ENCODE measurements at regions of chr3 and their contacts with region 1.

Region 1: GRCh38 chr3:14947886-14948555 is 638 bp downstream of the NR2C2 start:
- DNase-seq: peak; percentile 97
- H3K4me3 Mint-ChIP-seq: peak overlapping the region; percentile 99
- H3K27ac Mint-ChIP-seq: peak overlapping the region; percentile 100
- H3K4me1 Mint-ChIP-seq: peaks cover 42% of the 10 kb centered on the region
- H3K27me3 Mint-ChIP-seq: no peaks in the 10 kb centered on the region

Region 2: DNA sequence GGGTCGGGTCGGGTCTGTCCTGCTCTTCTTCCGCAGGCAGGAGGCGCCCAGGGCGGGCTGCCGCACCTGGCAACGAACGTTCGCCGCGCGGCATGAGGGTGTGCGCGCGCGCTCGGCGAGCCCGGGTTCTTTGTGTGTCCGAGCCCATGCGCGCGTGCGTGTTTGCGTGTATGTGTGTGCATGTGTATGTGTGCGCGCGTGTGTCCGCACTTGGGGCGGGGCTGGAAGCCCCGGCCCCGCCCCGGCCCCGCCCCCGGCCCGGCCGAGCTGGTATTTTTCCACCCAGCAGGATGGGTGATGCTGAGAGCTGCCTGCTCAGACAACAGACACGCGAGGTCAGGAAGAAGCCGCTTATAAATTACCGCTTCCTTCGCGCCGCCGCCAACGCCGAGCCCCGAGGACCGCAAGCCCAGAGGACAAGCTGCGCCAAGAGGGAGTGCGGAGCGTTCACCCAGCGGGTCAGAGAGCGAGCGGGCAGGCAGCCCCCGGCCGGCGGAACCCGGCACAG is 545.7 kb before region 1 on chr3 and contains the start of gene SLC6A6:
- CTCF ChIA-PET with region 1: no interaction called
- intact Hi-C with region 1: loop called (anchors 1 kb)
- DNase-seq: peak; percentile 91
- H3K4me3 Mint-ChIP-seq: peak within 1 kb of the TSS; percentile 96
- H3K27ac Mint-ChIP-seq: peak within 1 kb of the TSS; percentile 91
- H3K4me1 Mint-ChIP-seq: peaks cover 32% of the 10 kb centered on the region
- H3K27me3 Mint-ChIP-seq: no peaks in the 10 kb centered on the region
- total RNA-seq, gene SLC6A6: 32.2 to 36.9 TPM

Region 3: GRCh38 chr3:14651440-14652251 is 296.4 kb before region 1 on chr3 and contains the start of gene CCDC174:
- CTCF ChIA-PET with region 1: no interaction called
- intact Hi-C with region 1: loop called (anchors 1 kb)
- DNase-seq: peak; percentile 97
- H3K4me3 Mint-ChIP-seq: peak within 1 kb of the TSS; percentile 99
- H3K27ac Mint-ChIP-seq: peak within 1 kb of the TSS; percentile 98
- H3K4me1 Mint-ChIP-seq: peaks cover 38% of the 10 kb centered on the region
- H3K27me3 Mint-ChIP-seq: no peaks in the 10 kb centered on the region
- total RNA-seq, gene CCDC174: 16.1 to 20.7 TPM

Region 4: DNA sequence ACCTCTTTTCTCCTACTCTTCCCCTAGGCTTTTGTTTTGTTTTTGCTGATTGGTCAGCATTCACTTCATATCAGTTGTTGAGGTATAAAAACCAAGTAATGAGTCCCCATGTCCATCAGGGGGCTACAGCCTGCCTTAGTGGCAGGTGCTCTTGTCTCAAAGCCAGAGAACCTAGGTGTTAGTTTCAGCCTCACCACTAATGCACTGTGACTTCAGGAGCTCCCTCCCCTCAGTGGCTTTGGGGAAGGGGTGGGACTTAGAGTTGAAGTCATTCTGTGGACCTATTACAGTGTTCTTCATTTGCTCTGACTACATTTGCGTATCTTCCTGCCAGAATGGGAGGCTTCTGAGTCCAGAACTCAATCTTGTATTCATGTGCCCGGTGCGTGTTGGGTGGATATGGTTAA is 41.0 kb after region 1 on chr3:
- CTCF ChIA-PET with region 1: no interaction called
- intact Hi-C with region 1: loop called (anchors 1 kb)
- DNase-seq: peak; percentile 77
- H3K4me3 Mint-ChIP-seq: no peak overlapping the region
- H3K27ac Mint-ChIP-seq: peak overlapping the region; percentile 27
- H3K4me1 Mint-ChIP-seq: peaks cover 50% of the 10 kb centered on the region
- H3K27me3 Mint-ChIP-seq: no peaks in the 10 kb centered on the region

Region 5: DNA sequence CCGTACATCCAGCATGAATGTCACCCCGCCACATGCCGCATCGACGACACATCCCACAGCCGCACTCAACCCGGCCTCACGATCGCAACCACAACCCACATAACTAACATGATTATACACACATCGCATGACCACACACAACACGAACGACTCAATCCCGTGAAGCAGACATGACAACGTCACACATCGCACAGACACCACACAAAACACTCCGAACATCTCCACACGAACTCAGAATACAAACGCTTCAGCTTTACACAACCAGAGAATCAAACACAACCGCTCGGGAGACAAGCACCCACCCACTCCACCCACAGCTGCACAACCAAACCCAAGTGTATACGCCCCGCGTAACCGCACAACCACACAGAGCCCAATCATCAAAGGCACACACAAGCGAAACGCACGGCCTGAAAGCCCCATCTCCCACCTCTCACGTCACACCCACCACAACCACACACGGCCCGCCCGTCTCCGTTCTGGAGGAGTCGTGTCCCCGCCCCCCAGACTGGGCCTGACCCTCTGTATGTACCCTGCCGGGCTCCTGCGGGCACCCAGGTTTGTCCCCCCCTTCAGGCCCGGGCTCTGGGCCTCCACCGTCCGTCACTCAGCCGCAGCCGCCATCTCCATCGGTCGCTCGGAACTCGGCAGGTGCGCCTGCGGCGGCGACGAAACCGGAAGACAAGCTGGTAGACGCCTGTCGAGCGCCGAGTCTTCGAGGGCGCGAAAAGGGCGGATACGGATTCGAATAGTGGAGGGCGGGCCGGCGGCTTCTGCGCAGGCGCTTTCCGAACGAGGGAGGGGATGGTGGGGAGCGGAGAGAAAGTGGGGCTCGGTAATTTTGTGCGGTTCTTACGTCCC is 150.7 kb after region 1 on chr3 and contains the start of gene RBSN:
- CTCF ChIA-PET with region 1: no interaction called
- intact Hi-C with region 1: loop called (anchors 1 kb)
- DNase-seq: peak; percentile 97
- H3K4me3 Mint-ChIP-seq: peak within 1 kb of the TSS; percentile 90
- H3K27ac Mint-ChIP-seq: peak within 1 kb of the TSS; percentile 83
- H3K4me1 Mint-ChIP-seq: peaks cover 10% of the 10 kb centered on the region
- H3K27me3 Mint-ChIP-seq: no peaks in the 10 kb centered on the region
- total RNA-seq, gene RBSN: 15.3 to 15.8 TPM

Region 6: DNA sequence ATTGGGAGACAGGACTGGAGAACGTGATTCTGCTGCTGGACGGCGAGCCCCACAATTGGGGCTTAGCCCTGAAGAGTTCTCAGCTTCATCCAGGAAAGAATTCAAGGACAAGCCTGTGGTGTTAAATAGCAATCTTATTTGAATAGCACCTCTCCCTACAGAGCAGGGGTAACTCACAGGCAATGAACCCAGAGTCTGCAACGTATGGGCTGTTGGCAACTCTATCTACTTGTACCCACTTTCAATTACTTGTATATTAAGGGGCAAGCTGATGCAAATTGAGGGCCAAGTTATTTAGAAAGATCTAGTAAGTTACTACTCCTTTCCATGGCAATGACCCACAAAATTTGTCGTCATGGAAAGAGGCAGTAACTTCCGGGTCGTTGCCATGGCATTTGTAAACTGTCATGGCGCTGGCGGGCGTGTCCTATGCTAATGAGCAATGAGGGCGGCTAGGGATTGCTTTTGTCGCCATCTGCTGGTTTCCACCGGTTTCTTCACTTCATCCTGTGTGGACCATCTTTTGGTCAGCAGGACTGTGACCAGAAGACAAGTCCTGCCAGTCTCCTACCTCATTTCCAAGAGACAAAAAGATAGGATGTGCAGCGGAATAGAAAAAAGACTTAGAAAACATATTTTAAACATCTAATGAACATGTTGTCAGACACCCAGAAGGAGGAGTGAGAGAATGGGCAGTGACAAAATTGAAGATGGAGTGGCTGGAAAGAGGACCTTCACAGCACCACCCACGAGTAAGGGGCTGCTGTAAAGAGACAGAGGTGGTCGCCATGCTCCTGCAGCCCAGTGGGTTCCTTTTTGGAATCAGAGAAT is 430.2 kb after region 1 on chr3:
- CTCF ChIA-PET with region 1: no interaction called
- intact Hi-C with region 1: loop called (anchors 1 kb)
- DNase-seq: peak; percentile 97
- H3K4me3 Mint-ChIP-seq: no peak overlapping the region
- H3K27ac Mint-ChIP-seq: peak overlapping the region; percentile 24
- H3K4me1 Mint-ChIP-seq: peaks cover 5% of the 10 kb centered on the region
- H3K27me3 Mint-ChIP-seq: no peaks in the 10 kb centered on the region

Region 7: DNA sequence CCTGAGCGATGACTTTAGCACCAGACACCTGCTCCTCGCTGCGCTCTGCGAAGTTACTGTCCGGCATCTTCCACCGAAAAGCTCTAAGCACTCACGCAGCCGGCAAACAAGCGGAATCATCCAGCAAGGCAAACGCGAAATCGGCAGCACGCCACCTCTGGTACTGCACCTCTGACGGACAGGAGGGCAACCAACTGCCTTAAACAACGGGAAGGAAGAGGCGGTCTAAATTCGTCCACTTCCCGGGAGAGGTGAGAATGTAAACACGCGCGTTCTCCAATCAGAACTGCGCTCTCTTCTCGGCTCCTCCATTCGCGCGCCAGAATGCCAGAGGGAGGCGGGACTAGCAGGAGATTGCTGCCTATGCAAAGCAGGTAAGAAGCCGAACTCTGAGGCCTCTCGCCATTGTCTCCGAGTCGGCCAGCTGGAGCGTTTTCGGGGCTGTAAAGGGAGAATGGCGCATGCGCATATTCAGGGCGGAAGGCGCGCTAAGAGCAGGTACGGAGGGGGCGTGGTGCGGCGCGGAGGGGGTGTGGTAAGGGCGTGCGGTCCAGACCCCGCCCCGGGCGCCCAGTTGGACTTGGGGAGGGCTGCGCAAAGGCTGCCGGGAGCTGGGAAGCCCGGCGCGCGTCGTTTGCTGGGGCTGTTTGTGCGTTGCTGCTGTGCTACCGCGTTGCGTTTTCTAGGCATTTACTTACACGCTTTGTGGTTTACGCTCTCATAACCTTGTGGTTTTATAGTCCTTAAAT is 653.5 kb after region 1 on chr3 and contains the starts of genes BTD and HACL1:
- CTCF ChIA-PET with region 1: no interaction called
- intact Hi-C with region 1: loop called (anchors 1 kb)
- DNase-seq: peak; percentile 99
- H3K4me3 Mint-ChIP-seq: peak within 1 kb of the TSS; percentile 99
- H3K27ac Mint-ChIP-seq: peak within 1 kb of the TSS; percentile 96
- H3K4me1 Mint-ChIP-seq: peaks cover 46% of the 10 kb centered on the region
- H3K27me3 Mint-ChIP-seq: no peaks in the 10 kb centered on the region
- total RNA-seq, gene BTD: 8.7 to 9.7 TPM
- total RNA-seq, gene HACL1: 25.3 to 26.5 TPM

Measured in activated naive CD4-positive, alpha-beta T cell treated with anti-CD3 and anti-CD28 coated beads for 36 hours (primary cell).